Activated B cell treated with CpG ODN at 0.5 μM for 24 hours (primary cell): ENCODE measurements at regions of chr5 and their contacts with region 1.

Region 1: DNA sequence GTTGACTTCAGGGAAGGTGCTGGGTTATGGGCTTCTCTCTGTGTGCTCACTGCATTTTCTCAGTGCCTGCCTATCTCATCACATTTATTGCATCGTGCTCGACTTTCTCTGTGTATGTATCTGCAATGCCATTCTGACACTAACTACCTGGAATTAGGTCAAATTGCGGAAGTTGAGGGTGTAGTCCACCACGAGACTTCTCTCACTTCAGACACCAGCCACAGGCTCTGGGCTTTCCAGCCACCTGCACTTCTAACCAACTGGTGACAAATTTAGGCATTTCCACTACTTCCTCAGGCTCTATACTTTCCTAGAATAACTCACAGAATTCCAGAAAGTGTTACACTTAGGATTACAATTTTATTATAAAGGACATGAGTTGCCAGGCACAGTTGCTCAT is 188.6 kb upstream of the ZNF608 start:
- DNase-seq: no peak
- ATAC-seq: peak; percentile 63
- H3K4me3 Mint-ChIP-seq: peak overlapping the region; percentile 38
- H3K27ac Mint-ChIP-seq: peak overlapping the region; percentile 94
- H3K4me1 Mint-ChIP-seq: peaks cover 24% of the 10 kb centered on the region
- H3K27me3 Mint-ChIP-seq: no peaks in the 10 kb centered on the region
- CTCF ChIP-seq: no peak

Region 2: GRCh38 chr5:123671042-123671441 is 1264.0 kb before region 1 on chr5:
- CTCF ChIA-PET with region 1: no interaction called
- POLR2A ChIA-PET with region 1: no interaction called
- intact Hi-C with region 1: loop called (anchors 5 kb)
- DNase-seq: no peak
- ATAC-seq: peak; percentile 37
- H3K4me3 Mint-ChIP-seq: no peak overlapping the region
- H3K27ac Mint-ChIP-seq: no peak overlapping the region
- H3K4me1 Mint-ChIP-seq: peaks cover 3% of the 10 kb centered on the region
- H3K27me3 Mint-ChIP-seq: no peaks in the 10 kb centered on the region
- CTCF ChIP-seq: peak; percentile 92

Region 3: DNA sequence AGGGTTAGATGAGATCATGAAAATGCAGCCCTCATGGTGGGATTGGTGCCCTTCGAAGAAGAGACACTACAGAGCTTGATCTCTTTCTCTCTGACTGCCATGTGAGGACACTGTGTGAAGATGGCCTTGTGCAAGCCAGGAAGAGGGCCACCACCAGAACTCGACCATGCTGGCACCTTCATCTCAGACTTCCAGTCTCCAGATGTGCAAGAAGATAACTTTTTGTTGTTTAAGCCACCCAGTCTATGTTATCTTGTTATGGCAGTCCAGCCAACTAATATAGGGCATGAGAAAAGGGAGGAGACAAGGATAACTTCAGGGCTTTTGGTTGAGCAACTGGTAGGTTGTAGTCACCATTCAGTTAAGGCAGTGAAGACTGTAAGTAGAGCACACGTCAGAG is 907.7 kb before region 1 on chr5:
- CTCF ChIA-PET with region 1: no interaction called
- POLR2A ChIA-PET with region 1: no interaction called
- intact Hi-C with region 1: no loop called
- DNase-seq: no peak
- ATAC-seq: no peak
- H3K4me3 Mint-ChIP-seq: no peak overlapping the region
- H3K27ac Mint-ChIP-seq: no peak overlapping the region
- H3K4me1 Mint-ChIP-seq: peaks cover 4% of the 10 kb centered on the region
- H3K27me3 Mint-ChIP-seq: no peaks in the 10 kb centered on the region
- CTCF ChIP-seq: no peak

Region 4: GRCh38 chr5:124453221-124454051 is 481.6 kb before region 1 on chr5:
- CTCF ChIA-PET with region 1: no interaction called
- POLR2A ChIA-PET with region 1: no interaction called
- intact Hi-C with region 1: loop called (anchors 10 kb)
- DNase-seq: peak; percentile 31
- ATAC-seq: peak; percentile 95
- H3K4me3 Mint-ChIP-seq: peak overlapping the region; percentile 67
- H3K27ac Mint-ChIP-seq: peak overlapping the region; percentile 79
- H3K4me1 Mint-ChIP-seq: peaks cover 43% of the 10 kb centered on the region
- H3K27me3 Mint-ChIP-seq: no peaks in the 10 kb centered on the region
- CTCF ChIP-seq: no peak

Region 5: DNA sequence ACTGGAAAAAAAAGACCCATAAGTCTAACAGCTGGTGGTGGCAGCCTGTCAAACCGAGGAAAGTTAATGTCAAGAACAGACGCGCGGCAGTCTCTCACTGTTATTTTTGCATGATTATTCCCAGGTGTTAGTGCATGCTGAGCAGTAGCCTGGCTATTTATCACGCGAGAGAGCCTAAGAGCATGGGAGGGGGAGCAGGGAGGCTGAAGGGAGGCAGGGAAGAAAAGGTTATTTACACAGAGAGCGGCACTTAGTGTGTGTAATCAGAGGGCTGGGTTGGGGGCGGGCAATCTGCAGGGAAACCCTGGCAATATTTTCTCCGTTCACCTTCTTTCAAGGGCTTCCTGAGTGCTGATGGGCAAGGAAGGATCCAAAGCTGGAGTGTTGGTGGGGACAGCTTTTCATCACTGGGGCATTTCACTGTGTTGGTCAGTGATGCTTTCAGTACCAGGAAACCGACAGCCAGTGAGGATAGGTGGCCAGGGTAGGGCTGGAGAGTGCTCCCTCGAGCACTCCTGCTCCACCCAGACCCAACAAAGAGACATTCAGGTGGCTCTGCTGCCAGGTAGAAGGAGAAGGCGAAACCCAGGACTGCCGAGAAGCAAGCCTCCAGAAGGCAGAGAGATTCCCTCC is 228.2 kb before region 1 on chr5:
- CTCF ChIA-PET with region 1: no interaction called
- POLR2A ChIA-PET with region 1: interaction called, 6 read pairs
- intact Hi-C with region 1: loop called (anchors 1 kb)
- DNase-seq: no peak
- ATAC-seq: no peak
- H3K4me3 Mint-ChIP-seq: peak overlapping the region; percentile 67
- H3K27ac Mint-ChIP-seq: peak overlapping the region; percentile 89
- H3K4me1 Mint-ChIP-seq: peaks cover 92% of the 10 kb centered on the region
- H3K27me3 Mint-ChIP-seq: no peaks in the 10 kb centered on the region
- CTCF ChIP-seq: no peak

Region 6: DNA sequence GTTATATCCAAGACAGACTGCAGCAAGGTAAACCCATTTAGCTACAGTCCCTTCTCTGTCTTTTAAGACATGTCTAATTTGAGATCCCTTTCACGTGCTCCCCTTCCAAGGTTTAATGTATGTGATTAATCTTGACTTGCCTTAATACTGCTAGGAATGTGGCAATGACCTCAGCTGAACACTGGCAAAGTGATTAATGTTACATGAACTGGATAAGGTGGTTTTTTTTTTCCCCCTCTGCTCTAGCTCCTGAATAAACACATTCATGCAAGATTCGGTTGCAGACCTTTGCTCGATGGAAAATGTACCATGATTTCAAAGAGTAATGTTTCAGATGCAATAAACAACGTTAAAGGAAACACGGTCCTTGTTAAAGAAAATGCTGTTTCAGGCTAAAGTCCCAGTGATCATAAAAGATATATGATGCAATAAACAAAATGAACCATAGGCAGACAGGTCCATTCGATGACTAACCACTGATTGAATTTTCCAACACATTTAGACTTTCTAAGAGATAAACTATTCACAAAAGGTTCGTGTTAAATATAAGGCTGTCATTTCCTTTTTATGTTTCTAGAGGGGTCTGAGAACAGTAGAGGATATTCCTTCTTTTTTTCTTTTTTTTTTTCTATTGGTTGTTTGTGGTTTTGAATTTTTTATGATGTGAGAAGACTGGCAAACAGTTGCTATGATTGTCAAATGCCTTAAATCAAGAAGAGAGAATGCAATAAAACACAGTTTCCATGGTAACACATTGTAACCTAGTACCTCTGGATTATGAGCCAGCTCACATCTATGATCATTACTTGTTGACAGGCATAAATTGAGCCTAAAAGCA is 144.0 kb before region 1 on chr5:
- CTCF ChIA-PET with region 1: no interaction called
- POLR2A ChIA-PET with region 1: no interaction called
- intact Hi-C with region 1: no loop called
- DNase-seq: no peak
- ATAC-seq: no peak
- H3K4me3 Mint-ChIP-seq: no peak overlapping the region
- H3K27ac Mint-ChIP-seq: no peak overlapping the region
- H3K4me1 Mint-ChIP-seq: peaks cover 4% of the 10 kb centered on the region
- H3K27me3 Mint-ChIP-seq: no peaks in the 10 kb centered on the region
- CTCF ChIP-seq: no peak

Region 7: GRCh38 chr5:124920909-124921666 is 14.0 kb before region 1 on chr5:
- CTCF ChIA-PET with region 1: interaction called, 5 read pairs
- POLR2A ChIA-PET with region 1: interaction called, 13 read pairs
- intact Hi-C with region 1: loop called (anchors 1 kb)
- DNase-seq: no peak
- ATAC-seq: peak; percentile 83
- H3K4me3 Mint-ChIP-seq: no peak overlapping the region
- H3K27ac Mint-ChIP-seq: no peak overlapping the region
- H3K4me1 Mint-ChIP-seq: peaks cover 10% of the 10 kb centered on the region
- H3K27me3 Mint-ChIP-seq: no peaks in the 10 kb centered on the region
- CTCF ChIP-seq: no peak

Region 8: DNA sequence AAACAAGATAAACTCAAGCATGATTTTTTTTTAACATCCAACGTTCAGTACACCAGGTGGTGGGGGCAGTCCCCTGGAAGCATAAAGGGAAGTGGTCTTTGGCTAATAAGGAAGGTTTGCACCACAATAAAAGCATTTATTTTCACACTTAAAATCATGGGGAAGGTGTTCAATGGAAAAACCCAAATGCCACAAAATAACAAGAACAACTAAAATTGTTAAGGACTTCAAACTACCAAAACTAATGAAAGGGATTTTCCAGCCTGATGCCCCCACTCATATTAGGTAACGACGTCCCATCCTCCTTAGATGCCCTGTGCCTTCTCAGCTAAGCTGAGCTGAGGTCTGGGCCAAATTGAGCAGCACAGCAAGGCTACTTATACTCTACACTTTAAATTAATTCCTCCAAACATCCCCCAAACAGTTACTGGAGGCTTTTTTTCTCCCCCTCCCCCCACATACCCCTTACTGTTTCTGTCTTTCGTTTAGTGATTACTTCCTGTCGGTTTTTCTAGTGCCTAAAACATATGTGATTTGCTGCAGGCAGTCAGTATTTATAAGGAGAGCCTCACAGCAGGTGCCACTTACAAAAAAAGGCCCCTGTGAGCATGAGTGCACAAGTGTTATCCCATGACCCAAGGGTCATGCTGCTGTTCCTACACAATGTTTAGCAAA is 71.1 kb after region 1 on chr5:
- CTCF ChIA-PET with region 1: interaction called, 3 read pairs
- POLR2A ChIA-PET with region 1: interaction called, 9 read pairs
- intact Hi-C with region 1: loop called (anchors 1 kb)
- DNase-seq: no peak
- ATAC-seq: peak; percentile 67
- H3K4me3 Mint-ChIP-seq: peak overlapping the region; percentile 66
- H3K27ac Mint-ChIP-seq: peak overlapping the region; percentile 90
- H3K4me1 Mint-ChIP-seq: peaks cover 71% of the 10 kb centered on the region
- H3K27me3 Mint-ChIP-seq: no peaks in the 10 kb centered on the region
- CTCF ChIP-seq: no peak

Region 9: DNA sequence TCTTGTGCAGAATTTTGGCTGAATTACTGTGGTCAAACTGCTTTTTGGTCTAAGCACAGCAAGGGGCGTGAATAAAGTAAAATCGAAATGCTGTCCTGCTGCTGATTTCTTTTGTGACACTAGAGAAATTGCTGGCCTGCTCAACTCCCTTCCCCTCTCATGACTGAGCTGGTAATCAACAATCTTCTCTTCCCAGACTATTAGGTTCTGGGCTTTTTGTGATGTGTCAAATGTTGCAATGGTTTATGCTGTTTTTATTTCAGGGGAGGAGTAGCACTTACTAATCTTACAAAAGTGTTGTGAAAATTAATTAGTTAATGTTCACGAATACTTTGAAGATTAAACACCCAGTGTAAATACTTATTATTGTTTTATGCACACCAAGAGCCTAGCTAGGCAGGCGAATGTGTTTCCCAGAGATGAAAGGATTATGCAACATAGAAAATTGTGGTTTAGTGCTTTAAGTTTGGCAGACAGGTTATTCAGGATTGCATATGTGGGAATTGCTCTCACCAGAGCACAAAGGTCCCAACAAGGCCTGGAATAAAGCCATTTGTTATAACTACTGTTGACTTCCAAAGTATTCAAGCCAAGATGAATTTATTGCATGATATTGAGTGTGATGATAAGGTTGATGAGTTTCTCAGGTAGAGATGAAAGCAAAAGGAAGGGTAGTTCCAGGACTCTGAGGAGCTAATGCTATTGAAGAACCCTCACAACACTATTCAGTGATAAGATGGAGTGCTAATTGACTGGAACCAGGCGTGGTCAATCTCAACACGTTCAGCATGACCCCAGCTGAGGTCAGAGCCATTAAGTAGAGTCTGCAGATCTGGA is 92.0 kb after region 1 on chr5:
- CTCF ChIA-PET with region 1: no interaction called
- POLR2A ChIA-PET with region 1: no interaction called
- intact Hi-C with region 1: no loop called
- DNase-seq: no peak
- ATAC-seq: no peak
- H3K4me3 Mint-ChIP-seq: no peak overlapping the region
- H3K27ac Mint-ChIP-seq: no peak overlapping the region
- H3K4me1 Mint-ChIP-seq: peaks cover 6% of the 10 kb centered on the region
- H3K27me3 Mint-ChIP-seq: no peaks in the 10 kb centered on the region
- CTCF ChIP-seq: no peak